ENCODE measurements at regions of chr11 and their contacts with region 1.

Region 1: DNA sequence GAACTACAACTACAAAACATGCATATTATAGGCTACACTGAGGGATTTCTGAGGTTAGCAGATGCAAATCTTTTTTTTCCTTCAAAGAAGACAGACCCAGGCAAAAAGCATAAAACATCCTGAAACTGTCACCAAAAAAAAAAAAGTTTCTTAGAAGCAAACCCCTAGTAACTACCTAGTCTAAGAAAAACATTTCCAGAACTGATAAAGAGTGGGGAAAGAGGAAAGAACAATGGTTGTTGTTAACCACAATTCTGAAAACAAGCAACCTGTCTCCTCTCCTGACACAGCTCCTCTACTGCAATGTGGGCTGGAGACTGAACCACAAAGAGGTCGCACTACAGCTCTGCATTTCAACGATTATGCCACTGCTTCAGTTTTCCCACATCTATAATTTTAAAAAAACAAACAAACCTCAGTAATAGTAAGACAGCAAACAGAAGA is 15.0 kb downstream of the DENND5A start:
- DNase-seq: peak; percentile 85 to 94 (median 92)
- H3K4me3 ChIP-seq: peak overlapping the region in 3 of 7 experiments; percentile 19 to 57 (median 50)
- H3K27ac ChIP-seq: peak overlapping the region in 1 of 2 experiments; percentile 68
- H3K4me1 ChIP-seq: peaks cover 17 to 80% (median 73%) of the 10 kb centered on the region in 4 experiments
- H3K27me3 ChIP-seq: no peaks in the 10 kb centered on the region

Region 2: DNA sequence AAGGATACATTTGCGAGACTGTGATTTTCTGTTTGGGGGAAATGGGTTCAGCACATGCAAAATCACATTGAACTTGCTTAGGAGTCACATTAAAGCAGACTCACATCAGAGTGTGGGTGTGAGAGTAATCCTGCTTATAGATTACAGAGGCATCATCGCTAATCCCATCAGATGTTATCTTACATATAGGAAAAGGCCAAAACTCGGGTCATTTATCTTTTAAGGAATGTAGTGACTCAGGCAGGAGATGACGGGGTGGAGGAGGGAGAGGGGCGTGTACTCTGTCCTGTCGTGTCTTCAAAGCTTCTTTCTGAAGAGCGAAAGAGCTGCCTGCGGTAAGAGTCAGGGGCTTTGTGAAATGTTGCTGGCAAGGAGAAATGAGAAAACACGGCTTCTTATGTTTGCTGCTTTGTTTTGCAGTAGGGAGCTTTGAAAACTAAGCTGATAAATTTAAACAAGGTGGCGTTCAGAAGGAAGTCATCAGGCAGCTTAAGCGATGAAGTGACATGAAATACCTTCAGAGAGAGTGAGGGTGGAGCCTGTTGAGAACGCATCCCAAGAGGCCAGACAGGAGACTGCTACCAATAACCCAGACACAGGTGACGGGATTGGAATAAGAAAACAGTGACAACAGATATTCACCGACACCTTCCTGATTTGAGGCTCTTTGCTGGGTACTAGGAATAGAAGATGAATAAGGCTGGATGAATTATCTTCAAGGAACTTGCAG is 315.2 kb before region 1 on chr11:
- CTCF ChIA-PET with region 1: no interaction called
- POLR2A ChIA-PET with region 1: no interaction called
- DNase-seq: no peak
- H3K4me3 ChIP-seq: no peak overlapping the region
- H3K27ac ChIP-seq: no peak overlapping the region
- H3K4me1 ChIP-seq: peaks cover 0 to 5% (median 0%) of the 10 kb centered on the region in 4 experiments
- H3K27me3 ChIP-seq: no peaks in the 10 kb centered on the region

Region 3: DNA sequence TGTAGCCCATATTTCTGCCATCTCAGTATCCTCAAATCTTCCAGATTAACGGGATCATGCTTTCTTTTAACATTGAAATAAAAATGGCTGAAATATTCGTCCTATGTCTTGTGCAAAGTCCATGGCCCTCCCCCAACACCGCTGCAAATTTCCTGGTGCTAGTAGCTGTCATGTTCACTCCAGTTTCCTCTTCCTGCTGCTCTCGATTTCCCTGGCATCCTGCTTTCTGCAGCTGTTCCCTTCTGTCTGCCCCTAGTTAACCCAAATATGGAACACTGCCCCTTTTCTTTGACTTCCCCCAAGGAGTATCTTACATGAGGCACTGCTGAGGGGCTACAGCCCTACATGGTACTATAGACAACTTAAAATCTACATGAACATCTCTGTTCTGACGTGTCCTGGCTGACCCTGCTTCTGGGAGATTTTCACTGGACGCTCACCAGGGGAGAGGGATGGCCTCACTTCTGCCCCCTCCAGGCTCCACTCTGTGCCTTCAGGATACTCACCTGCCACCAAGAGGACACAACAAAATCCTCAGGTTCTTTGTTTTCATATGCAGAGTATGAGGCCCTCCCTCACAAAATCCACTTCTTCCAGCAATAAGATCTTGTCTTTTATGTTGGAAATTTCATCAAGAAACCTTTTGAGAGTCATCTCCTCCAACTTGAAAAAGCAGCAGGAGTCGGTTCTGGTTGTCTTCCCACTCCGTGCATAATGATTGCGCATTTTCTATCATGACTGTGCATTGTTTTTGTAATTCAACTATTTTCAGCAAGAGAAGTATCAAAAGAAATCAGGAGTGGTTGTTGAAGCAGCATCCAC is 129.3 kb before region 1 on chr11:
- CTCF ChIA-PET with region 1: no interaction called
- POLR2A ChIA-PET with region 1: no interaction called
- DNase-seq: no peak
- H3K4me3 ChIP-seq: no peak overlapping the region
- H3K27ac ChIP-seq: no peak overlapping the region
- H3K4me1 ChIP-seq: no peaks in the 10 kb centered on the region
- H3K27me3 ChIP-seq: no peaks in the 10 kb centered on the region

Region 4: GRCh38 chr11:9259981-9260837 is 10.0 kb after region 1 on chr11:
- CTCF ChIA-PET with region 1: interaction called, 20 read pairs
- POLR2A ChIA-PET with region 1: interaction called, 9 read pairs
- DNase-seq: no peak
- H3K4me3 ChIP-seq: no peak overlapping the region
- H3K27ac ChIP-seq: no peak overlapping the region
- H3K4me1 ChIP-seq: peaks cover 8 to 35% (median 27%) of the 10 kb centered on the region in 4 experiments
- H3K27me3 ChIP-seq: no peaks in the 10 kb centered on the region

Region 5: GRCh38 chr11:9293646-9294045 is 43.5 kb after region 1 on chr11:
- CTCF ChIA-PET with region 1: no interaction called
- POLR2A ChIA-PET with region 1: no interaction called
- DNase-seq: no peak
- H3K4me3 ChIP-seq: no peak overlapping the region
- H3K27ac ChIP-seq: no peak overlapping the region
- H3K4me1 ChIP-seq: no peaks in the 10 kb centered on the region
- H3K27me3 ChIP-seq: no peaks in the 10 kb centered on the region